Breast epithelium (tissue), 4 donors: ENCODE measurements at regions of chr17 and their contacts with region 1.

Region 1: GRCh38 chr17:78497115-78497540 is 80.1 kb downstream of the DNAH17 start:
- DNase-seq: peak; percentile 61 to 75
- H3K4me3 ChIP-seq: no peak overlapping the region
- H3K27ac ChIP-seq: no peak overlapping the region
- H3K4me1 ChIP-seq: no peaks in the 10 kb centered on the region
- H3K27me3 ChIP-seq: no peaks in the 10 kb centered on the region
- CTCF ChIP-seq: peak in 2 of 3 donors; percentile 71 to 73
- POLR2A ChIP-seq: no peak

Region 2: GRCh38 chr17:78450696-78451345 is 46.3 kb before region 1 on chr17:
- intact Hi-C with region 1: no loop called
- DNase-seq: no peak
- H3K4me3 ChIP-seq: no peak overlapping the region
- H3K27ac ChIP-seq: no peak overlapping the region
- H3K4me1 ChIP-seq: no peaks in the 10 kb centered on the region
- H3K27me3 ChIP-seq: no peaks in the 10 kb centered on the region
- CTCF ChIP-seq: no peak
- POLR2A ChIP-seq: no peak

Region 3: GRCh38 chr17:78557598-78558039 is 60.5 kb after region 1 on chr17:
- intact Hi-C with region 1: no loop called
- DNase-seq: no peak
- H3K4me3 ChIP-seq: no peak overlapping the region
- H3K27ac ChIP-seq: no peak overlapping the region
- H3K4me1 ChIP-seq: no peaks in the 10 kb centered on the region
- H3K27me3 ChIP-seq: peaks cover 0 to 8% of the 10 kb centered on the region in 2 donors
- CTCF ChIP-seq: no peak
- POLR2A ChIP-seq: no peak

Region 4: DNA sequence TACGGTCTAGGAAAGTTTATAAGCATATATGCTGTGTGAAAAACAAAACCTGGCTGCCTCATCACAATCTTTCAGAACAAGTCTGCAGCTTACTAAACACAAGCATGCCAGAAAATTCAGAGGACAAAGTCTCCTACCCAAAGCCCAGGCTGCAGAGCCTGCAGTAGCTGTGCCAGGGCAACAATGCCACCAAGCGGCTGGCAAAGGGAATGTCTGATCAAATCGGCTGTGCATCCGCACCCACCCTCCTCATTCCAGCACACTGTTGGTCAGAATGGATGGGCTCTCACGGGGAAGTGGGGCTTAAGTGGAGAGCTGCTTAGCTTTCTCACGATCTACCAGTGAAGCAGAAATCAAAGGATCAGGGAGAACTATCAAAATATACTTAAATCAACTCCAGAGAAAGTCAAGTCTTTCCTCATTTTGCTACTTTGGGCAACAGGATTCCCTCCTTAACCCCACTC is 211.4 kb after region 1 on chr17:
- intact Hi-C with region 1: loop called (anchors 10 kb)
- DNase-seq: peak in 1 of 2 donors; percentile 61
- H3K4me3 ChIP-seq: no peak overlapping the region
- H3K27ac ChIP-seq: no peak overlapping the region
- H3K4me1 ChIP-seq: no peaks in the 10 kb centered on the region
- H3K27me3 ChIP-seq: no peaks in the 10 kb centered on the region
- CTCF ChIP-seq: peak; percentile 34 to 77 (median 64)
- POLR2A ChIP-seq: no peak